ENCODE measurements at regions of chr12 and their contacts with region 1.

Region 1: DNA sequence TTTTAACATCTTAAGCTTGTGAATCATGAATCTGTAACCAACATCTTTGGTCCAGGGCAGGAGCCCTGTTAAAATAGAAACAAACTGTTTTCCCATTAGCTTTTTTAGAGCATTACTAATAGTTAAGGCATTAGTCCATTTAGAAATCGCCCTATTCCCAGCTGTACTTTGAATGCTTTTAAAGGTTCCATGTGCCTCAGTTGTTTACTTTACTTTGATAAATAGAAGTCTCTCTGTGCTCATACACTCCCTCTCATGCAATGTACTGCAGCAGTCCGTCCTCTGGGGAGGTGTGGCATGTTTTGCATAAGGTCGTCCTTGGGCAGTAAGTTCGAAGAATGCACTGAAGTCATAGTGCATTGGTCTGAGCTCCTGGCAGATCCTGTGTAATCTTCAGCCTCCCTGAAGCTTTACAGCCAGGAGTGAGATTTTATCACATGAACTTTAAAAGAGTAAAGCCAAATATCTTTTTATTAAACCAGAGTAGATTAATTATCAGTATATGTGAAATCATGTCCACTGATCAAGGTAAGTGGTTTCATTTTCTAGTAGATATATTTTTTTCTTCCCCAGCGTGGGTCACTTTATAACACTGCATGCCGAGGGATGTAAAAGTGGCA is 134.7 kb downstream of the FGD4 start:
- DNase-seq: peak; percentile 62
- H3K4me3 Mint-ChIP-seq: peak overlapping the region; percentile 71
- H3K27ac Mint-ChIP-seq: peak overlapping the region; percentile 74
- H3K4me1 Mint-ChIP-seq: peaks cover 44% of the 10 kb centered on the region
- H3K27me3 Mint-ChIP-seq: no peaks in the 10 kb centered on the region
- CTCF ChIP-seq: no peak

Region 2: GRCh38 chr12:32211066-32211899 is 322.8 kb before region 1 on chr12:
- CTCF ChIA-PET with region 1: no interaction called
- intact Hi-C with region 1: no loop called
- DNase-seq: no peak
- H3K4me3 Mint-ChIP-seq: no peak overlapping the region
- H3K27ac Mint-ChIP-seq: no peak overlapping the region
- H3K4me1 Mint-ChIP-seq: no peaks in the 10 kb centered on the region
- H3K27me3 Mint-ChIP-seq: no peaks in the 10 kb centered on the region
- CTCF ChIP-seq: no peak

Region 3: GRCh38 chr12:32399337-32400113 is 134.6 kb before region 1 on chr12 and contains the start of gene FGD4:
- CTCF ChIA-PET with region 1: interaction called, 3 read pairs
- intact Hi-C with region 1: loop called (anchors 5 kb)
- DNase-seq: peak; percentile 89
- H3K4me3 Mint-ChIP-seq: peak within 1 kb of the TSS; percentile 98
- H3K27ac Mint-ChIP-seq: peak within 1 kb of the TSS; percentile 91
- H3K4me1 Mint-ChIP-seq: peaks cover 7% of the 10 kb centered on the region
- H3K27me3 Mint-ChIP-seq: no peaks in the 10 kb centered on the region
- CTCF ChIP-seq: peak; percentile 38
- total RNA-seq, gene FGD4: 37.4 and 38.6 TPM in 2 replicates

Region 4: DNA sequence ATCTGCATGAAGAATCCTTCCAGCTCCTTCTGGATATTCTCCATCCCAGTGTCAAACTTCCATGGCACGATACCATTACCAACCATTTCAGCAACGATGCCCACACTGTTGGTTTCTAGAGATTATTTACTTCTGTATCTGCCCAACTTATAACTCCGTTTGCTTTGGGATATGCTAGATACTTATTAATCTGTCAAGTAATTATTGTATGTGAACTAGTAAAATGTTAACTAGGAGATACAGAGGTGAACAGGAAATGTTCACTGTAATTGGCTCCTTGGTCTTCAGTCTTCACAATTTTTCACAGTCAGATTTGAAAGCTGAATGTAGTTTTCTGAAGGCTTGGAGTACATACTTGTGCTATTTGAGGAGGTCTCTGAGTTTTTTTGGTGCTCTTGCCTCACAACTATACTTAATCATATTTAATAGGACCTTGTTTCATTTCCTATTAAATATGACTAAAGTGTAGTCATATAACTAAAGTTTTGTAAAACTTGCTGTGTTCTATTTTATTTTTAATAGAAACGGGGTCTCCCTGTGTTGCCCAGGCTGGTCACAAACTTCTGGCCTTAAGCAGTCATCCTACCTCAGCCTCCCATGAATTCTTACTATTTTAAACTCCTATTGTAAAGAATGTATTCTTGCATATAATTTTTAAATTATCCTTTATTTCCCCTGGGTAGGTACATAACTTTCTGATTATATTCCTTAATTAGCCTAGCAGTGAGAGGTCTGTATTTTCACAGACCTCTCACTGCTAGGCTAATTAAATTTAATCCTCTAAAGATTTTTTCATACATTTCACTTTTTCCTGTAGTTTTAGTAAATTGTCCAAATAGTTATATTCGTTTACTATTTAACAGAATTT is 55.0 kb before region 1 on chr12:
- CTCF ChIA-PET with region 1: interaction called, 8 read pairs
- intact Hi-C with region 1: loop called (anchors 5 kb)
- DNase-seq: no peak
- H3K4me3 Mint-ChIP-seq: peak overlapping the region; percentile 44
- H3K27ac Mint-ChIP-seq: peak overlapping the region; percentile 89
- H3K4me1 Mint-ChIP-seq: peaks cover 21% of the 10 kb centered on the region
- H3K27me3 Mint-ChIP-seq: no peaks in the 10 kb centered on the region
- CTCF ChIP-seq: no peak

Region 5: GRCh38 chr12:32548691-32549281 is 14.7 kb after region 1 on chr12:
- CTCF ChIA-PET with region 1: interaction called, 14 read pairs
- intact Hi-C with region 1: no loop called
- DNase-seq: no peak
- H3K4me3 Mint-ChIP-seq: no peak overlapping the region
- H3K27ac Mint-ChIP-seq: no peak overlapping the region
- H3K4me1 Mint-ChIP-seq: peaks cover 32% of the 10 kb centered on the region
- H3K27me3 Mint-ChIP-seq: no peaks in the 10 kb centered on the region
- CTCF ChIP-seq: no peak

Region 6: DNA sequence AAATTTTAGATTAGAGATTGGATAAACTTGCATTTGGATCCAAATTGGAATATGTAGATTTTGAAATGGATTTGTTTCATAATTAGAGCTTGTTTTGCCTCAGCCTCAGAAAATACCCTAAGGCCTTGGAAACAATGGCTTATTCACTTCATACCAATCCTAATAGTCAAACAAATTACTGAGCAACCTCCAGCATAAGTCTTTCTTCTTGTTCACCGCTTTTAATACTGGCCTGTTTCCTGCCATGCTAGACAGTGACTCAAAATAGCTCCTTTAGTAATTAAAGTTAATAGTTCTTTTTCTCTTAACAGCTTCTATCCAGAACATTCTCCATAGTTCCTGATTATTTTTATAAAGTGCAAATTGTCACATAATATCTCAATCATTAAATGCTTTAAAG is 34.2 kb after region 1 on chr12:
- CTCF ChIA-PET with region 1: interaction called, 3 read pairs
- intact Hi-C with region 1: loop called (anchors 2 kb)
- DNase-seq: no peak
- H3K4me3 Mint-ChIP-seq: no peak overlapping the region
- H3K27ac Mint-ChIP-seq: no peak overlapping the region
- H3K4me1 Mint-ChIP-seq: peaks cover 51% of the 10 kb centered on the region
- H3K27me3 Mint-ChIP-seq: no peaks in the 10 kb centered on the region
- CTCF ChIP-seq: no peak

Region 7: GRCh38 chr12:32777159-32777558 is 243.1 kb after region 1 on chr12:
- CTCF ChIA-PET with region 1: no interaction called
- intact Hi-C with region 1: no loop called
- DNase-seq: no peak
- H3K4me3 Mint-ChIP-seq: no peak overlapping the region
- H3K27ac Mint-ChIP-seq: no peak overlapping the region
- H3K4me1 Mint-ChIP-seq: peaks cover 20% of the 10 kb centered on the region
- H3K27me3 Mint-ChIP-seq: no peaks in the 10 kb centered on the region
- CTCF ChIP-seq: no peak

Measured in Calu3 (cell line).